ENCODE measurements at regions of chr17 and their contacts with region 1.

Region 1: DNA sequence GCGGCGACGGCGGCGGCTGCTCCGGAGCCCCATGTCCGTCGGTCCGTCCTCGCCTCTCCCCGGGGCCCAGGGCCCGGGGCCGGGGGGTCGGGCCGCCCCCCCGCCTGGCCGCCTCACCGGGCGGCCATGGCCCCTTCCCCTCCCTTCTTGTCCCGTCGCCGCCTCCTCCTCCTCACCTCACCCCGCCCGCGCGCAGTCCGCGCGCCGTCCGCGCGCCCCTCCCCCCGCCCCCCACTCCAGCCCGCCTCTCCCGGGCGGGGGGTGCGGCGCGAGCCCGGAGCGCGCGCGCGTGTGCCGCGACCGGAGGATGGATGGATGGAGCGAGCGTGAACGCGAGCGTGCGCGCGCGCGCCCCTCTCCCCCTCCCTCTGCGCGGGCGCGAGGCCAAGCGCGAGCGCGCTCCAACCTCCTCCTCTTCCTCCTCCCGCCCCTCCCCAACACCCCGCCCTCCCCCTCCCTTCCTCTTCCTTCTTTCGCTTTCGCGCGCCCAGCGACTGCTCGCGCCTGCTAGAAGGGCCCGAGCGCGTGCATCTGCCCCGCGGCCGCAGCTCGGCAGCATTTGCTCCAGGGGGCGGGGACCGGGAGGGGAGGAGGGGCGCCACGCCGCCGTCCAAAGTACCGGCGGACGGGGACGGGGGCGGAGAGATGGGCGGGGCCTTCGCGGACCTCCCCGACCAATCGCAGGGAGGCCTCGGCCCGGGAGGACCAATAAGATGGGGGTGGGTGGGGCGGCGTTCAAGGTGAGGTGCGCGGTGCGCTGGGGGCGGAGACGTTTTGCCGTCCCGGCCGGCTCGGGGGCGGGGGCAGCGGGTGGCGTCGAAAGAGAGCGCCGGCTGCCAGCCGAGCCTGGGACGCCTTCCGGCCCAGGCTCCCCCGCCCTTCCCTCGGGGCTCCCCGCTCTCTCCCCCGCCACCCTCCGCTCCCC is at the start of gene ATXN7L3:
- DNase-seq: peak; percentile 96 to 99 (median 98)
- H3K4me3 ChIP-seq: peak within 1 kb of the TSS; percentile 82 to 88
- H3K4me3 Mint-ChIP-seq: peak within 1 kb of the TSS; percentile 90 to 94 (median 92)
- H3K27ac ChIP-seq: peak within 1 kb of the TSS; percentile 82
- H3K27ac Mint-ChIP-seq: peak within 1 kb of the TSS; percentile 89 to 98 (median 96)
- H3K4me1 ChIP-seq: peaks cover 43% of the 10 kb centered on the region
- H3K4me1 Mint-ChIP-seq: peaks cover 30 to 58% (median 40%) of the 10 kb centered on the region in 4 donors
- H3K27me3 ChIP-seq: no peaks in the 10 kb centered on the region
- H3K27me3 Mint-ChIP-seq: no peaks in the 10 kb centered on the region
- total RNA-seq, gene ATXN7L3: 123 to 128 TPM

Region 2: GRCh38 chr17:44070455-44071197 is 129.2 kb before region 1 on chr17 and contains the start of gene G6PC3:
- CTCF ChIA-PET with region 1: no interaction called
- POLR2A ChIA-PET with region 1: interaction called, 3 read pairs
- intact Hi-C with region 1: loop called (anchors 2 kb)
- DNase-seq: peak; percentile 56 to 76 (median 64)
- H3K4me3 ChIP-seq: peak within 1 kb of the TSS; percentile 69 to 79
- H3K4me3 Mint-ChIP-seq: peak within 1 kb of the TSS; percentile 90 to 97 (median 94)
- H3K27ac ChIP-seq: peak within 1 kb of the TSS; percentile 78
- H3K27ac Mint-ChIP-seq: peak within 1 kb of the TSS; percentile 83 to 98 (median 96)
- H3K4me1 ChIP-seq: peaks cover 33% of the 10 kb centered on the region
- H3K4me1 Mint-ChIP-seq: peaks cover 22 to 50% (median 34%) of the 10 kb centered on the region in 4 donors
- H3K27me3 ChIP-seq: no peaks in the 10 kb centered on the region
- H3K27me3 Mint-ChIP-seq: no peaks in the 10 kb centered on the region
- total RNA-seq, gene G6PC3: 10.6 to 11.8 TPM

Region 3: DNA sequence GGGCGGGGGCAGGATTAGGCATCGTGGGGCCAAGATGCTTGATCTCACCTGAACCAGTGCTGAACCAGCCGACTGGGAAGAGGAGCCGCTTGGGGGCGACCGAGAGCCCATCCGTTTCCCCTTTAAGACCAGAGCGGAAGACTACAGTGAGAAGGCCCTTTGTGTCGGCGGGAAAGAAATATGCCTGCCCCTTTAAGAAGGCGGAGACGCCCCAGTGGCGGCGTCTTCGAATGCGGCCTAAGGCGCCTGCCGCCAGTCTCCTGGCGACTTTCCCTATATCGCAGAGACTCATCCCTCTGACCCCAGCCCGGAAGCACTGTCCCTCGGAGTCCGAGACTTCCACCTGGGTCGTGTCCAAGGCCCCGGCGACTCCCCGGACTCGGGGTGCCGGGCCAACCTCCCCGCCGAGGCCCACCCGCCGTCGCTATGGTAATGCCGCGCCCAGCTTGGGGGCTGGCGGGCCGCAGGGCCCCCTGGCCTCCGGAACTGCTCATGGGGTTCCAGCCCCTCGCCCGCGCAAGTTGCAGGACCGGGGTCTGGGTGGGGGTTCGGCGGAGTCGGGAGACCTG is 58.0 kb before region 1 on chr17 and contains the start of gene HROB:
- CTCF ChIA-PET with region 1: no interaction called
- POLR2A ChIA-PET with region 1: no interaction called
- intact Hi-C with region 1: loop called (anchors 1 kb)
- DNase-seq: peak; percentile 96 to 99 (median 97)
- H3K4me3 ChIP-seq: peak within 1 kb of the TSS; percentile 66 to 69
- H3K4me3 Mint-ChIP-seq: peak within 1 kb of the TSS; percentile 77 to 94 (median 84)
- H3K27ac ChIP-seq: peak within 1 kb of the TSS; percentile 79
- H3K27ac Mint-ChIP-seq: peak within 1 kb of the TSS; percentile 88 to 95 (median 90)
- H3K4me1 ChIP-seq: peaks cover 14% of the 10 kb centered on the region
- H3K4me1 Mint-ChIP-seq: peaks cover 2 to 19% (median 10%) of the 10 kb centered on the region in 4 donors
- H3K27me3 ChIP-seq: no peaks in the 10 kb centered on the region
- H3K27me3 Mint-ChIP-seq: peaks cover 7% of the 10 kb centered on the region in 2 donors
- total RNA-seq, gene HROB: 0.36 to 0.64 TPM

Region 4: DNA sequence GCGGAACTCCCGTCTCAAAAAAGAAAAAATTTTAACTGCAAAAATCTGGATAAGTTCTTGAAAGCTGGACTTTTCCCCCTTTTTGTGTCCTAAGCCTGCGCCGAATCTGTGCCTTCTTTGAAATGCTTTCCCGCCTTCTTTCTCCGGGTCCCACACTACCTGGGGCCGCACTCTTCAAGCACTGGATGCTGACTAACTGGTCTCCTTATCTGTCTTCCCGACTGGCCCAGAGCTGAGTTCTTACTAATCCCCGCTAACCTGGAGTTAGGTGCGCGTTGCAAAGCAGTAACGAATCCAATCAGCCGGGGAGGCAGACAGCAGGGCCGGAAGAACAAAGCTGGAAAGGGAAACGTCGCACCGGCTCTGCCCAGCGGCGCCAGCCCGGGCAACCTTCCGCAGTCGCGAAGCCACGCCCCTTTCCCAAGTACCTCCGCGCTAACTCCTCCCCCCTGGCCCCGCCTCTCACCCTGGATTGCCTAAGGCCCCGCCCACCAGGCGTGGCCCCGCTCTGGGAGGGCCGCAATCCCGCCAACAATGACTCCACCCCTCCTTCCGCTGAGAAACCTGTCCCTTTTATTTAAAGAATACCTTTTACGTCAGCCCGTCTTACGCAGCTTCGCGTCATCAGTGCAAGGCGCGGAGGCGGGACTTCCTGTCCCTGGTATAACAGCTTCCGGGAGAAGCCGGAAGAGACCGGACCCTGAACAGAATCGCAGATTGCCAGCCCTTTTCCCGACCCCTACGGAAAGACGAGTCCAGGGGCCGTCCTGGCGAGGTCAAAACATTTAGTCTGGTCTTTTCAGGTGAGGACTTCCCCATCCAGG is 13.3 kb before region 1 on chr17 and contains the start of gene TMUB2:
- CTCF ChIA-PET with region 1: interaction called, 11 read pairs
- POLR2A ChIA-PET with region 1: interaction called, 143 read pairs
- intact Hi-C with region 1: loop called (anchors 1 kb)
- DNase-seq: peak; percentile 99 to 100 (median 99)
- H3K4me3 ChIP-seq: peak within 1 kb of the TSS; percentile 96 to 98
- H3K4me3 Mint-ChIP-seq: peak within 1 kb of the TSS; percentile 97 to 100 (median 99)
- H3K27ac ChIP-seq: peak within 1 kb of the TSS; percentile 98
- H3K27ac Mint-ChIP-seq: peak within 1 kb of the TSS; percentile 96 to 100 (median 100)
- H3K4me1 ChIP-seq: peaks cover 44% of the 10 kb centered on the region
- H3K4me1 Mint-ChIP-seq: peaks cover 34 to 67% (median 51%) of the 10 kb centered on the region in 4 donors
- H3K27me3 ChIP-seq: no peaks in the 10 kb centered on the region
- H3K27me3 Mint-ChIP-seq: no peaks in the 10 kb centered on the region
- total RNA-seq, gene TMUB2: 45.4 to 47.9 TPM

Region 5: GRCh38 chr17:44293509-44294226 is 93.9 kb after region 1 on chr17:
- CTCF ChIA-PET with region 1: no interaction called
- POLR2A ChIA-PET with region 1: no interaction called
- intact Hi-C with region 1: no loop called
- DNase-seq: no peak
- H3K4me3 ChIP-seq: no peak overlapping the region
- H3K4me3 Mint-ChIP-seq: no peak overlapping the region
- H3K27ac ChIP-seq: no peak overlapping the region
- H3K27ac Mint-ChIP-seq: no peak overlapping the region
- H3K4me1 ChIP-seq: no peaks in the 10 kb centered on the region
- H3K4me1 Mint-ChIP-seq: no peaks in the 10 kb centered on the region
- H3K27me3 ChIP-seq: no peaks in the 10 kb centered on the region
- H3K27me3 Mint-ChIP-seq: peaks cover 4 to 14% of the 10 kb centered on the region in 2 donors

Region 6: DNA sequence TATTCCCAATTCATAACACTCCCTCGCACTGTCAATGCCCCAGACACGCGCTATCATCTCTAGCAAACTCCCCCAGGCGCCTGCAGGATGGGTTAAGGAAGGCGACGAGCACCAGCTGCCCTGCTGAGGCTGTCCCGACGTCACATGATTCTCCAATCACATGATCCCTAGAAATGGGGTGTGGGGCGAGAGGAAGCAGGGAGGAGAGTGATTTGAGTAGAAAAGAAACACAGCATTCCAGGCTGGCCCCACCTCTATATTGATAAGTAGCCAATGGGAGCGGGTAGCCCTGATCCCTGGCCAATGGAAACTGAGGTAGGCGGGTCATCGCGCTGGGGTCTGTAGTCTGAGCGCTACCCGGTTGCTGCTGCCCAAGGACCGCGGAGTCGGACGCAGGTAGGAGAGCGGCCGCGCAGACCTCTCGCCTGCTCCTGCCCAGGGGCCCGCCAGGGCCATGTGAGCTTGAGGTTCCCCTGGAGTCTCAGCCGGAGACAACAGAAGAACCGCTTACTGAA is 145.2 kb after region 1 on chr17 and contains the start of gene GRN:
- CTCF ChIA-PET with region 1: interaction called, 9 read pairs
- POLR2A ChIA-PET with region 1: interaction called, 10 read pairs
- intact Hi-C with region 1: no loop called
- DNase-seq: peak; percentile 81 to 87 (median 84)
- H3K4me3 ChIP-seq: peak within 1 kb of the TSS; percentile 90 to 97
- H3K4me3 Mint-ChIP-seq: peak within 1 kb of the TSS; percentile 90 to 97 (median 92)
- H3K27ac ChIP-seq: peak within 1 kb of the TSS; percentile 57
- H3K27ac Mint-ChIP-seq: peak within 1 kb of the TSS; percentile 69 to 88 (median 82)
- H3K4me1 ChIP-seq: peaks cover 10% of the 10 kb centered on the region
- H3K4me1 Mint-ChIP-seq: peaks cover 10 to 31% (median 19%) of the 10 kb centered on the region in 4 donors
- H3K27me3 ChIP-seq: no peaks in the 10 kb centered on the region
- H3K27me3 Mint-ChIP-seq: peaks cover 0 to 6% of the 10 kb centered on the region in 2 donors
- total RNA-seq, gene GRN: 49.5 to 50.0 TPM

Measured in CD4-positive, alpha-beta memory T cell (primary cell).